Right cardiac atrium (tissue), 5 donors: ENCODE measurements at regions of chr10 and their contacts with region 1.

Region 1: GRCh38 chr10:105950410-105950809 is 1214.1 kb downstream of the SORCS1 start:
- DNase-seq: peak; percentile 44 to 77 (median 52)
- ATAC-seq: peak in 1 of 2 donors; percentile 57
- H3K4me3 ChIP-seq: no peak overlapping the region
- H3K27ac ChIP-seq: no peak overlapping the region
- H3K4me1 ChIP-seq: no peaks in the 10 kb centered on the region
- H3K27me3 ChIP-seq: no peaks in the 10 kb centered on the region

Region 2: GRCh38 chr10:105827133-105827532 is 123.3 kb before region 1 on chr10:
- intact Hi-C with region 1: no loop called
- DNase-seq: no peak
- ATAC-seq: no peak
- H3K4me3 ChIP-seq: no peak overlapping the region
- H3K27ac ChIP-seq: no peak overlapping the region
- H3K4me1 ChIP-seq: no peaks in the 10 kb centered on the region
- H3K27me3 ChIP-seq: no peaks in the 10 kb centered on the region

Region 3: GRCh38 chr10:105844241-105844640 is 106.2 kb before region 1 on chr10:
- intact Hi-C with region 1: no loop called
- DNase-seq: no peak
- ATAC-seq: no peak
- H3K4me3 ChIP-seq: no peak overlapping the region
- H3K27ac ChIP-seq: no peak overlapping the region
- H3K4me1 ChIP-seq: no peaks in the 10 kb centered on the region
- H3K27me3 ChIP-seq: no peaks in the 10 kb centered on the region

Region 4: GRCh38 chr10:106175760-106176377 is 225.5 kb after region 1 on chr10:
- intact Hi-C with region 1: loop called in 2 of 4 experiments (anchors 10 kb)
- DNase-seq: no peak
- ATAC-seq: no peak
- H3K4me3 ChIP-seq: no peak overlapping the region
- H3K27ac ChIP-seq: no peak overlapping the region
- H3K4me1 ChIP-seq: no peaks in the 10 kb centered on the region
- H3K27me3 ChIP-seq: no peaks in the 10 kb centered on the region